Prostate gland (tissue), 2 donors: ENCODE measurements at regions of chr17 and their contacts with region 1.

Region 1: DNA sequence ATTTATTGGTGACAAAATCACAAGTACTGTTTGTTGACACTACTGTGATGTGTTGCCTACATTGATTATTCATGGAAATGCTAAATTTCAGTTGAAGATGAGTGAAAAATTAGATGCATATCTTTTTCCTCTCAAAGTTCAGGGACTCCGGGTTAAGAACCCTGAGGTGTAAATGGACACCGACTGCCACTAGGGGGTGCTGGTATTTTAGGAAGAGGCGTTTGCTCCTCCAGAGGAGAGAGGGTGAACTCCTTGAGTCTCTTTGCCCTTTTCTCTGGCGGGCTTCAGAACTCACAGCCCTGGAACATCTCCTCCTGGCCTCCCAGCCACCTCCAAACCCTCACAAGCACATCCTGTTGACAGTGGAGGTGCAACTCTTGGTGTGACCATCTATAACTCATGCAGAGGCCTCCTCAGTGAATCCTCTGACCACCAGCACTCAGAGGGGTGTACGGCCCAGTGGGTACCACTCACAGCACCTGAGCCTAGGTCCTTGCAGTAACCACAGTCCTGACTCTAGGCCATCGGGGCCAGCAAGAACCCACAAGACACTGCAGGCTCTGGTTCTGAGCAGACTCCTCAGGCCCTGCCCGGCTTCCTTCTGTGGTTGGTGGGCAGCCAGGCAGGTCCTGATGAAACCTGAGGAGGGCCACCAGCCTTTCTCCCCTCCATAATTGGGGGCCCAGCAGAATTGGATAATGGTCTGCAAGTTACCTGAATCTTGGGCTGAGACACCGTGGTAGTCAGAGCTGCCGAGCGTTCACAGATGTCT is 26.2 kb upstream of the PIK3R5 start:
- DNase-seq: peak; percentile 61
- H3K4me3 ChIP-seq: no peak overlapping the region
- H3K27ac ChIP-seq: no peak overlapping the region
- H3K4me1 ChIP-seq: no peaks in the 10 kb centered on the region
- H3K27me3 ChIP-seq: no peaks in the 10 kb centered on the region
- CTCF ChIP-seq: peak; percentile 69 to 84 (median 82)
- POLR2A ChIP-seq: no peak

Region 2: DNA sequence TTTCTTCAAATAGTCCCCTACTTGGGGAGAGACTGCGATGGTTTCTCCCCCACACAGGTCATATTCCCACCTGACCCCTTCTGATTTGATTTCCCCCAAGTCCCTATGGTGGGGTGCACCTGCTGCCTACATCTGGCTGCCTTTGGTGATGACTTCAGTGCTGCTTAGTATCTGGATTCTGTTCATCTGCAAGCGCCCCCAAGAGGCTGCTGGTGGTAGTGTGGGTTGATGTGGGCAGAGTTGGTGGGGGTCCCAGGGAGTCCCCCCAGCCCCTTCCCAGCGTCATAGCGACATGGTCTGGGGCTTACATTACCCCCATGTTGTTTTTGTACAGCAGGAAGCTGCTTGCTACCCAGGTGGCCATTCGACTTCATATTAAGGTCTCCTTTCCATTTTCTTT is 128.8 kb after region 1 on chr17:
- intact Hi-C with region 1: no loop called
- DNase-seq: no peak
- H3K4me3 ChIP-seq: no peak overlapping the region
- H3K27ac ChIP-seq: no peak overlapping the region
- H3K4me1 ChIP-seq: no peaks in the 10 kb centered on the region
- H3K27me3 ChIP-seq: no peaks in the 10 kb centered on the region
- CTCF ChIP-seq: peak in 1 of 4 experiments; percentile 10
- POLR2A ChIP-seq: no peak

Region 3: DNA sequence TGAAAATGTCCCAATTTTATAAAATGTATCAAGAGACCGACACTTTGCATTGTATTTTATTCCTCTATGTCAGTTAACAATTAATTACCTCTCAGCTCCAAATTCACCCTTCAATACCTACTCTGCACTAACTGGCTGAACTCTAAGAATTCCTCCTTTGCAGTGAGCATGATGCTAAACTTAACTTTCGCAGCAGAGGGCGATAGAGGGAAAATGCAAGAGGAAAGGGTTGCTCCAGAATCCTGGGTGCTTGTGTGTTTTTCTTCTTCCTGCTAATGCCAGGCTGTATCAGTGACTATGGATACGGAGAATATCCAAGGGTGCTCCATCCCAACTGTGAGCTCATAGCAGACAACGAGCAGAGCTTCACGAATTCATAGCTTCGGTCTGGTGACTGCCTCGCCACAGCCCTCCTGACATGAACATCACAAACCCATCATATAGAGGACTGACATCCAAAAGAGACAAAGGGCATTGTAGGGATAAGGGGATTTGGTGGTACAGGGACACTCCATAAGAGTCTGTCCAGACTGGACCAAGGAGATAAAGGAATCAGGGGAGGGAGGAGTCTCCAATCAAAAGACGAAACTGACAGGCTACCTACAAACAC is 411.0 kb after region 1 on chr17:
- intact Hi-C with region 1: loop called (anchors 10 kb)
- DNase-seq: no peak
- H3K4me3 ChIP-seq: no peak overlapping the region
- H3K27ac ChIP-seq: no peak overlapping the region
- H3K4me1 ChIP-seq: no peaks in the 10 kb centered on the region
- H3K27me3 ChIP-seq: no peaks in the 10 kb centered on the region
- CTCF ChIP-seq: peak in 3 of 4 experiments; percentile 9 to 21 (median 16)
- POLR2A ChIP-seq: no peak

Region 4: GRCh38 chr17:9522074-9522473 is 530.4 kb after region 1 on chr17:
- intact Hi-C with region 1: loop called (anchors 5 kb)
- DNase-seq: no peak
- H3K4me3 ChIP-seq: no peak overlapping the region
- H3K27ac ChIP-seq: no peak overlapping the region
- H3K4me1 ChIP-seq: no peaks in the 10 kb centered on the region
- H3K27me3 ChIP-seq: no peaks in the 10 kb centered on the region
- CTCF ChIP-seq: peak in 3 of 4 experiments; percentile 39 to 66 (median 55)
- POLR2A ChIP-seq: no peak